Ascending aorta (tissue), 2 donors: ENCODE measurements at regions of chr16 and their contacts with region 1.

Region 1: GRCh38 chr16:4693296-4693955 is at the start of gene NUDT16L1:
- DNase-seq: peak; percentile 86 to 98
- H3K4me3 ChIP-seq: peak within 1 kb of the TSS; percentile 85 to 93
- H3K27ac ChIP-seq: peak within 1 kb of the TSS; percentile 78 to 83
- H3K4me1 ChIP-seq: peaks cover 15 to 32% of the 10 kb centered on the region in 2 donors
- H3K27me3 ChIP-seq: no peaks in the 10 kb centered on the region
- CTCF ChIP-seq: peak; percentile 19 to 23 (median 23)
- total RNA-seq, gene NUDT16L1: 77.3 TPM

Region 2: DNA sequence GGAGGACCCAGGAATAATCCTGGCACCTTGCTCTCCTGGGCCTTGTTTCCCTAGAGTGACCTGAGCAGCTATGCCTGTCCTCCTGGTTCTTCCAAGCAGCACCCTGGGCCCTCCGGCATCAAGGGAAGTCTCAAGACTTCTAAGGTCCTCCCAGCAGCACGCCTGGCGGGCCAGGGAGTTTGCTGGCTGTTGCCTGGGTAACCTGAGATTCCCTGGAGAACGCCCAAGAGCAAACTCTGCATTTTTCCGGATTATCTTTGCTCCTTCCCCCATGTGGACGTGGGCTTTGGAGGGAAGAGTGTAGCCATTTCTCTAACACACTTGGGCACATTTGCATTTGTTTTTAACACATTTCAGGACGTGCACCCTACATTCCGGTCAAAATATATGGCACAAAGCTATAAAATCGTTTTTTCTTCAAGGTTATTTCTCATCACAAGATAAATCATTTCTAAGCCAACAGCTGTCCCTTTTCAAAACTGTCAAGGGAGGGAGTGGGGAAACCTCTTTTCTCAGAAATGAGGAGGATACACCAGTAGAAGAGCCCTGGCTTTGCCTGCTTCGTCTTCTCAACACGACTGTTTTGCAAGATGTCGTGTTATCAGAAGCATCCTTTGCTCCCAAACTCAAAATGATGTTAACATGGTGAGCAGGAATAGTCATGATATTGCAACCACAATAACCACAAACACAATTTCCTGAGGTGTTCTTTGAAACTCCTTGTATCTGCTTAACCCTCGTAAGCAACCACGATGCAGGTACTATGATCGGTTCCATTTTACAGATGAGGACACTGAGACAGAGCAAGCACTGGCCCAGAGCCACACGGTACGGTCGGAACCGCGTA is 693.7 kb before region 1 on chr16:
- intact Hi-C with region 1: no loop called
- DNase-seq: peak in 1 of 2 donors; percentile 77
- H3K4me3 ChIP-seq: no peak overlapping the region
- H3K27ac ChIP-seq: peak overlapping the region; percentile 21 to 27
- H3K4me1 ChIP-seq: peaks cover 4 to 18% of the 10 kb centered on the region in 2 donors
- H3K27me3 ChIP-seq: no peaks in the 10 kb centered on the region
- CTCF ChIP-seq: no peak

Region 3: GRCh38 chr16:4616047-4616811 is 77.2 kb before region 1 on chr16:
- intact Hi-C with region 1: loop called (anchors 5 kb)
- DNase-seq: peak; percentile 100
- H3K4me3 ChIP-seq: peak overlapping the region; percentile 92 to 98
- H3K27ac ChIP-seq: peak overlapping the region; percentile 91 to 98
- H3K4me1 ChIP-seq: peaks cover 23 to 41% of the 10 kb centered on the region in 2 donors
- H3K27me3 ChIP-seq: no peaks in the 10 kb centered on the region
- CTCF ChIP-seq: peak; percentile 41 to 56 (median 52)

Region 4: DNA sequence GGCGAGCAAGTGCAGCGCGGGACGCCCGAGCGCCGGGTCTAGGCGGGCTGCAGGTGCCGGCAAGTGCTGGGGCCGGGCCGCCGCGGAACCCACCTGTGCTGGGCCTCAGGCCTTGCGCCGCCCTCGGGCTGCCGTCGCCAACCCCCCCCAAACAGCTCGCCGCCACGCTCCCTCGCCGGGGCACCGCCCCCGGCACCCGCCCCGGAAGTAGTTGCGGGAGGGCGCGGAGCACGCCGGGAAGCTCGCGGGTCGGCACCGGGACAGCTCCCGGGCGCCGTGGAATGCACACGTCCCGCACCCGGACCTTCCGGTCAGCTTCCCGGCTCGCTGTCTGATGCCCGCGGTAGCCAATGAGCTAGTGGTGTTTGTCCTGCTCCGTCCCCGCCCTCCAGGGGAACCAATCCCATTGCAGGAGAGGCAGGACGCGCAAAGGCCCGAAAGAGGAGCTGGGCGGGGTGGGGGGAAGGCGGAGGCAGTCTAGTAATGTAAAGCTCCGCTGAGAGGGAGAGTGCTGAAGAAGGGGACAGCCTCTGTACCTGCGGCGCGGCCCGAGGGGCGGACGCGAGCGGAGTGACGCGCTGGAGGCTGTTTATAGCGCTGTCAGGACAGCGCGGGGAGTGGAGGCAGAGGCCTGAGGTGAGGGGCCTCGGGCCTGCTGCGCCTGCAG is 40.8 kb after region 1 on chr16 and contains the starts of genes ANKS3 and DNAAF8:
- intact Hi-C with region 1: loop called (anchors 1 kb)
- DNase-seq: peak; percentile 91 to 99
- H3K4me3 ChIP-seq: peak within 1 kb of the TSS; percentile 78 to 92
- H3K27ac ChIP-seq: peak within 1 kb of the TSS; percentile 78 to 79
- H3K4me1 ChIP-seq: peaks cover 0 to 8% of the 10 kb centered on the region in 2 donors
- H3K27me3 ChIP-seq: no peaks in the 10 kb centered on the region
- CTCF ChIP-seq: no peak
- total RNA-seq, gene ANKS3: 55.9 TPM
- total RNA-seq, gene DNAAF8: not detected